Activated B cell treated with CpG ODN at 0.5 μM for 24 hours (primary cell): ENCODE measurements at regions of chr13 and their contacts with region 1.

Region 1: DNA sequence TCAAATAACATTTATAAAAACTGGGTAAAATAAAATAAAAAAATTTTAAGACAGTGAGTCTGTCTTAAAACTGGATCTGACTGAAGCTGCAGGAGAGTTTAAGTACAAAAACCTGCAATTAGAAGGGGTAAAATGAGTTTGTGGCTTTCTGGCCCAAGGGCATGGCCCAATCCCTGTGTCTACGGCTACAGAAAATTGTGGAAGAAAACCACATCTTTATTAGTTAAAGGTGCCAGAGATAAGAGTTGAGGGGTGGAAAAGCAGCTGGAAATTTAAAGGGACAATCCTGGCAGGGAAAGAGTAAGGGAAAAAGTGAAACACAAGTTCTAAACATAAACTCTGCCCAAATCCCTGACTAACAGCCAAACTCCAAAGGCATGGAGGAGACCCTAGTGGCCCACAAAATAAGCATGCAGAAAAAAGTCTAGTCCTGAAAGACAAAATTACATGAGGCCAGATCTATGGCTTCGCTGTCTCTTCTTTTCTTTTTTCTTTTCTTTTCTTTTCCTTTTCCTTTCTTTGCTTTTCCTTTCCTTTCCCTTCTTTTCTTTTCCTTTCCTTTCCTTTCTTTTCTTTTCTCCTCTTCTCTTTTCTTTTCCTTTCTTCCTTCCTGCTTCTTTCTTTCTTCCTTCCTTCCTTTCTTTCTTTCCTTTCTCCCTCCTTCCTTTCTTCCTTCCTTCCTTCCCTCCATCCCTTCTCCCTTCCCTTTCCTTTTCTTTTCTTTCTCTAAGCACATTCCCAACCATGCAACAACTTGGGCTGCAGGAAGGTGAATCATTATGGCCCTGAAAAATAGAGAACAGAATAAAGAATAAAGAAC is 23.5 kb upstream of the DLEU7 start:
- DNase-seq: no peak
- ATAC-seq: no peak
- H3K4me3 Mint-ChIP-seq: no peak overlapping the region
- H3K27ac Mint-ChIP-seq: no peak overlapping the region
- H3K4me1 Mint-ChIP-seq: peaks cover 13% of the 10 kb centered on the region
- H3K27me3 Mint-ChIP-seq: peaks cover 2% of the 10 kb centered on the region
- CTCF ChIP-seq: no peak

Region 2: DNA sequence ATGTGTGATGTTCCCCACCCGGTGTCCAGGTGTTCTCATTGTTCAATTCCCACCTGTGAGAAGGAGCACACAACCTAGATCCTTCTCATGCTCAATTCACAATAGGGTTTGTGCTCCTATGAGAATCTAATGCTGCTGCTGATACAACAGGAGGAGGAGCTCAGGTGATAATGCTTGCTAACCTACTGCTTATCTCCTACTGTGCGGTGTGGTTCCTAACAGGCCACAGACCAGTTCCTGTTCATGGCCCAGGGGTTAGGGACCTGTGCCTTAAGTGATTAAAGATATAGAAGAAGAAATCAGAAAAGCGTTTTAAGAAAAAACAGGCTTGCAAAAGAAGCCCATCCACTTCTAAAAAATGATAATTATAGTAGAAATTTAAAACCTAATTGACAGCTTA is 41.0 kb before region 1 on chr13:
- CTCF ChIA-PET with region 1: no interaction called
- POLR2A ChIA-PET with region 1: no interaction called
- intact Hi-C with region 1: loop called (anchors 5 kb)
- DNase-seq: no peak
- ATAC-seq: no peak
- H3K4me3 Mint-ChIP-seq: no peak overlapping the region
- H3K27ac Mint-ChIP-seq: no peak overlapping the region
- H3K4me1 Mint-ChIP-seq: no peaks in the 10 kb centered on the region
- H3K27me3 Mint-ChIP-seq: no peaks in the 10 kb centered on the region
- CTCF ChIP-seq: no peak